Activated T-helper 1 cell treated with anti-CD3 and anti-CD28 coated beads, Interleukin-12 subunit alpha, Interleukin-12 subunit beta, Interleukin-2, Interleukin-4 antibody, amounts not matched to agents 30 ng/mL and 10 ng/mL and 1 ng/mL, durations not matched to agents 14 hours and 24 hours and 36 hours (primary cell): ENCODE measurements at regions of chr1 and their contacts with region 1.

Region 1: DNA sequence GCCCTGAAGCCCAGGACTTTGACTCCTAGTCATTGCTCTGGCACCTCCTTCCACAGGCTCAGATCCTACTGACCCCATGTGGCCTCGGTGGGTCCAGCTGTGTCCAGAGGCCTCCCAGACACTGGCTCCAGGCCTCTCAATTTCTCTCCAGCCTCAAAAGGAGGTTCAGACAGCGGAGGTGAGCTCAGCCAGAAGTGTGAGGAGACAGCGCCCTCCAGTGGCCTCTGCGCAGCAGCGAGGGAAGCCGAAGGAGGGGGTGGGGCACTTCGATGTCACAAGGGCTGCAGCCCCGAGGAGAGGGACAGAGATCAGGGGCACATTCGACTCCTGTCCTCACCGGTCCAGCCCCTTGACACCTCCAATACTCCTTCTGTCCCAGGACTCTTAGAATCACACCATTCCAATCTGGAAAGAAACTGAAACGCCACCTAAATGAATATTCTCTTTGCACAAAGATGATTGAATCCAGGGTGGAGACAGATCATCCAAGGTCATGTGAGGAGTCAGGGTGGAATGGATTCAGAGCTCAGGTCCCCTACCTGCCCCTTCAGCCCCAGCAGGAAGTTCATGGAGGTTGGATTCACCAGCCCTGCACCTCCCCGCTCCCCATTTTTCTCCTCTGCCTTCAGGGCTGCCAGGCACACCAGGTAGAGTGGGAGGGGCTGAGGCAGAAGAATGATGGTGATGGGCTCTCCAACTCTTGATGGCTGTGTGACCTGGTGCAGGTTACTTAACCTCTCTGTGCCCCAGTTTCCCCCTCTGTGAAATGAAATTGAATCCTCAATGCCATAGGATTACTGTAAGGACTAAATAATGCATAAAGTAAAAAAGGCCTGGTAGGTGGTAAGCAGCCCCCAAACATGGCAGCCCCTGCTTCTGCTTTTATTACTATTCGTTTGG is 34.8 kb upstream of the ZBTB40 start:
- DNase-seq: peak; percentile 59
- H3K4me3 Mint-ChIP-seq: no peak overlapping the region
- H3K27ac Mint-ChIP-seq: no peak overlapping the region
- H3K4me1 Mint-ChIP-seq: no peaks in the 10 kb centered on the region
- H3K27me3 Mint-ChIP-seq: peaks cover 25% of the 10 kb centered on the region

Region 2: DNA sequence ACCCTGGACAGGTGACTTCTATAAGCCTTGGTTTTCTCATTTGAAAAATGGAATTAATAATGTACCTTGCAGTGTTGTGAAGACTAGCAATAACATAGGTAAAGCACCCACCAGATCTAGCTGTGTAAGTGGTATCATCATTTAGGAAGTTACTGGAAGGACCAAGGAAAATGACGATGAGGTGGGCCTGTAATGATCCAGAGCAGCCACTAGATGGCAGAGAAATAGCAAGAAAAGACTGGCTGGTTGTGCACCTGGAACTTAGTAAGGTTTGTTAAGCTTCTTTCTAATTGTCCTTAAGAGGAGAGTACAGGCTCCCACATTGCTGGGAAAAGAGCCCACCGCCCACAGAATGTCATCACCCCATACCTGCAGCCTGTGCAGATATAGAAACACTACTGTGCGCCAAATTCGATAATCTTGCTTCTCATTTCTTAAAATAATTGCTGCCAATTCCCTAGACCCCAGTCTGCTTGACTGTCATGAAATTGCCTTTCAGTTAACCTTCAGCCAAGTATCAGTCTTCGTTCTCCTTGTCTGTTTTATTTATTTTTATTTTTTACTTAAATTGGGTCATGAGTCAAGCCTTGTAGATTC is 311.1 kb before region 1 on chr1:
- intact Hi-C with region 1: loop called (anchors 1 kb)
- DNase-seq: no peak
- H3K4me3 Mint-ChIP-seq: no peak overlapping the region
- H3K27ac Mint-ChIP-seq: peak overlapping the region; percentile 89
- H3K4me1 Mint-ChIP-seq: peaks cover 50% of the 10 kb centered on the region
- H3K27me3 Mint-ChIP-seq: no peaks in the 10 kb centered on the region

Region 3: DNA sequence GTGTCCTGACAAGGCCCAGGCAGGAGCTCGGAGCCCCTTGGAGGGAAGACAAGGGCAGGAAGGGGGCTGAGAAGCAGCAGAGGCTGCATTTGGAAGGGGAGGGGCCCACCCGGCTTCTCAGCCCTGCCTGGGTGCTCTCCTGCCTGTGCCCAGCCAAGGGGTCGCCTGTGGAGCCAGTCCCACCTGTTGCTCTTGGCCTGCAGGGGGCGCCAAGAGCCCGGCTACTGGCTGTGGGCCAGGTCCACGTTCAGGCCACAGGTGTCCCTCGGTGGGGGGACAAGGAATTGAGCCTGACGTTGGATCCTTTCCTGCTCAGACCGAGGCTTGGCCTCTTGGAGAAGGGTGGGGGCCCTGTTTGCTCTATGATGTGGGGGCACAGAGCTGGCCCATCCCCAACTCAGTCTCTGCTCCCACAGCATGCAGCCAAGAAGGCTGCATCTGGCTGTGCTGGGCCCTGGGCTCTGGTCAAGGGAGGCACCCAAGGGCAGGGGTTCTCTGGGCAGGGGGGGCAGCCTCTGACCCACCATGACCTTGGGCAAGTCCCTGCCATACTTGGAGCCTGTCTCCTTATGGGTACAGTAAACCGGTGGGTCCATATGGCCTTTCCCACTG is 284.8 kb before region 1 on chr1:
- intact Hi-C with region 1: loop called (anchors 1 kb)
- DNase-seq: peak; percentile 23
- H3K4me3 Mint-ChIP-seq: no peak overlapping the region
- H3K27ac Mint-ChIP-seq: no peak overlapping the region
- H3K4me1 Mint-ChIP-seq: no peaks in the 10 kb centered on the region
- H3K27me3 Mint-ChIP-seq: no peaks in the 10 kb centered on the region

Region 4: GRCh38 chr1:22673486-22674409 is 256.9 kb after region 1 on chr1:
- intact Hi-C with region 1: loop called (anchors 1 kb)
- DNase-seq: no peak
- H3K4me3 Mint-ChIP-seq: no peak overlapping the region
- H3K27ac Mint-ChIP-seq: no peak overlapping the region
- H3K4me1 Mint-ChIP-seq: no peaks in the 10 kb centered on the region
- H3K27me3 Mint-ChIP-seq: peaks cover 22% of the 10 kb centered on the region